ENCODE measurements at regions of chr4 and their contacts with region 1.

Region 1: DNA sequence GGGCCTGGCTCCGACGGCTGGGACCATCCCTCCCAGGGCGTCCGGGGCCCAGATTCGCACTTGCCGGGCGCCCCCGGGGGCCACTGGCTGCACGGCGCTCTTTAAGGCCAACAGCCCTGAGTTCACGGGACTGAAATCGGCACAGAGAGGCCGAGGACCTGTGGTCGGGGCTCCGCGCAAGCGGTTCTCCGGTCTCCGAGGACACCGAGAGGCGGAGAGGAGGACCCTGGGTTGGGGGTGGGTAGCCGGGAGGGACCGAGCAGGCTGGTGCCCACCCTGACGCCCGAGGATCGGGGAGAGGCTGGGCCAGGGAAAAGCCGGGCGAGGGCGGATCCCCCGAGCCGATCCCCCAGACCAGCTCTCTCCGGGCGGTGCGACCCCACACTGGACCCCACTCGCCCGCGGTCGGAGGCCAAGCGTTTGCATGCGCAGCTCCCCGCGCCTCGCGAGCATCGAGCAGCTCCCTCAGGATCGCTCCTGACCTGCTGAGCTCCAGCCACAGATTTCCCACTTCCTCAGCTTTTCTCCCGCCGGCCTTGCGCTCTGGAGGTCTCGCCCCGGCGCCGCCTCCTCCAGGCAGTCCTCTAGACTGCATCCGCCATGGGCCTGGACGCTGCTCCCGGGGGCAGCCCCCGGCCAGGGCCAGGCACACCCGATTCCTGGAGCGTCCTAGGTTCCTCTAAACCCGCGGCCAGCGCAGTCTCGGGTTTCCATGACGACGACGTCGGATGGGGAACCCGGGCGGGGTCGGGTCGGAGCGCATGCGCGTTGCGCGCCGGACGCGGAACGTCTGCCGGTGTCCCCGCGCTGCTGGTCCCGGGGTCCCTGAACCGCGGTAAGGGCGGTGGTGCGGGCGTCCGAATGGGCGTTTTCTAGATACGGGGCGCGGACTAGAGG is 17.6 kb upstream of the NAT8L start:
- DNase-seq: peak; percentile 84
- H3K4me3 Mint-ChIP-seq: peak overlapping the region; percentile 81
- H3K27ac Mint-ChIP-seq: no peak overlapping the region
- H3K4me1 Mint-ChIP-seq: no peaks in the 10 kb centered on the region
- H3K27me3 Mint-ChIP-seq: peaks cover 29% of the 10 kb centered on the region

Region 2: DNA sequence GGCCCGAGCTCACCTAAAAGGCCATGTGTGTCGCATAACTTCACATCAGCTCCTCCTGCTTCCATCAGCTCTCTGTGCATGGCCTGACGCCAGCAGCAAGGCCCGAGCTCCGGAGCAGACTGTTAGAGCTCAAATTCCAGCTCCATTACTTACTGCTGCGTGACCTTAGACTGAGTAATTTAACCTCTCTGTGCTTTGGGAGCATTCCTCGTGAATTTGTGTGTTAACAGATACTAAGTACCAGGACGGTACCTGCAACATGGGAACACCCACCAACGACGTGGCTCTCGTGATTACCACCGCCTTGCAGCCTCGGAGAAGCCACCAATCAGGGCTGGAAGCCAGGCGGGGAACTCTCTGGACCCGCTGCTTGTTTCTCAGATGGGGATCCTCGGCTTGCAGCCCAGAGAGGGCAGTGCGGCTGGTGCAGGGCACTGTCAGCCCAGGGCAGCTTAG is 198.5 kb before region 1 on chr4:
- intact Hi-C with region 1: no loop called
- DNase-seq: no peak
- H3K4me3 Mint-ChIP-seq: no peak overlapping the region
- H3K27ac Mint-ChIP-seq: no peak overlapping the region
- H3K4me1 Mint-ChIP-seq: peaks cover 11% of the 10 kb centered on the region
- H3K27me3 Mint-ChIP-seq: no peaks in the 10 kb centered on the region

Region 3: GRCh38 chr4:2008875-2009703 is 32.4 kb before region 1 on chr4 and contains the start of gene NELFA:
- intact Hi-C with region 1: loop called (anchors 2 kb)
- DNase-seq: peak; percentile 92
- H3K4me3 Mint-ChIP-seq: peak within 1 kb of the TSS; percentile 90
- H3K27ac Mint-ChIP-seq: peak within 1 kb of the TSS; percentile 86
- H3K4me1 Mint-ChIP-seq: peaks cover 29% of the 10 kb centered on the region
- H3K27me3 Mint-ChIP-seq: peaks cover 6% of the 10 kb centered on the region
- total RNA-seq, gene NELFA: 48.3 and 49.4 TPM in 2 replicates

Region 4: GRCh38 chr4:2024683-2025082 is 16.8 kb before region 1 on chr4:
- intact Hi-C with region 1: no loop called
- DNase-seq: no peak
- H3K4me3 Mint-ChIP-seq: no peak overlapping the region
- H3K27ac Mint-ChIP-seq: no peak overlapping the region
- H3K4me1 Mint-ChIP-seq: no peaks in the 10 kb centered on the region
- H3K27me3 Mint-ChIP-seq: peaks cover 59% of the 10 kb centered on the region

Region 5: DNA sequence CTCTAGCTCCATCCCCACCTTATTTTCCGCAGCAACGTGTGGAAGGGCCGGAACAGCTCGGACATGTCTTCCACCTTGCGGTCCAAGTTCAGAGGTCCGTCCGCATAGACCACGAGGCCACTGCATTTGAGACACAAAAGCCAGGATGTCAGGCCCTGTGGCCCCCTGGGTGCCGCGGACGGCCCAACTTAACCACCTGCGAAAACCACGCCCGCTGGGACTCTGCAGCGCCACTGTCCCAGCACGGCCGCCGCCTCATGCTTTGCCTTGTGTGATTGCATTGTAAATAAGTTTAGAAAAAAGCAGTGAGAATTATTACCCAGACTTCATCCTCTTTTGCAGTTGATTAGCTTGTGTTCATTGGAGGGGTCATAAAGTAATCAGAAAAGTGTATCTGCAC is 278.7 kb after region 1 on chr4:
- intact Hi-C with region 1: no loop called
- DNase-seq: peak; percentile 4
- H3K4me3 Mint-ChIP-seq: no peak overlapping the region
- H3K27ac Mint-ChIP-seq: no peak overlapping the region
- H3K4me1 Mint-ChIP-seq: no peaks in the 10 kb centered on the region
- H3K27me3 Mint-ChIP-seq: peaks cover 3% of the 10 kb centered on the region

Measured in activated T-helper 2 cell treated with anti-CD3 and anti-CD28 coated beads, Interferon-gamma antibody, Interleukin-2, Interleukin-4, amounts not matched to agents 10 μg/mL and 5 μg/mL and 100 μg/mL, durations not matched to agents 14 hours and 24 hours and 36 hours (primary cell).